ENCODE measurements at regions of chr4 and their contacts with region 1.

Region 1: DNA sequence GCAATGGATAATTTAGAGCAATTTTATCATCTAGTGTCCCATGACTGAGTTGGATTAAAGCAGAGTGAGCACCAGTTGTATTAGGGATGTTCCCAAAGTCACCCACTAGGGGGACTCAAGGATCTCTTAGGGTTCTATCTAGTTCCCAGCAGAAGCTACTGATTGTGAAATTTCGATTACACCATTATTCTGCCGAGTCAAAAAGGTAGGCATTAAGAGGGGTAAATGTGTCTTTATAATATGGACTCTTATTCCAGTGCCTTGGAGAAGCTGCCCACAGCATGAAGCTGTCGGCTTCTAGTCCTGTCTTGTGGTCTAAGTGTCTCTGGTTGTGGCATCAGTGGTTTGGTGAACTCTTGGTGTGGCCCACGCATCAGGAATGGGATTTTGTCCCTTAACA is 53.3 kb downstream of the RGS12 start:
- DNase-seq: peak in 1 of 2 donors; percentile 80
- ATAC-seq: peak; percentile 74 to 88 (median 83)
- H3K4me3 ChIP-seq: no peak overlapping the region
- H3K4me3 Mint-ChIP-seq: no peak overlapping the region
- H3K27ac ChIP-seq: no peak overlapping the region
- H3K27ac Mint-ChIP-seq: no peak overlapping the region
- H3K4me1 ChIP-seq: peaks cover 13% of the 10 kb centered on the region
- H3K4me1 Mint-ChIP-seq: peaks cover 21 to 24% of the 10 kb centered on the region in 2 donors
- H3K27me3 ChIP-seq: no peaks in the 10 kb centered on the region
- H3K27me3 Mint-ChIP-seq: peaks cover 0 to 2% of the 10 kb centered on the region in 2 donors
- CTCF ChIP-seq: peak; percentile 76

Region 2: GRCh38 chr4:3442959-3443749 is 97.0 kb after region 1 on chr4:
- intact Hi-C with region 1: loop called (anchors 1 kb)
- DNase-seq: peak; percentile 77 to 80
- ATAC-seq: peak; percentile 66 to 95 (median 87)
- H3K4me3 ChIP-seq: no peak overlapping the region
- H3K4me3 Mint-ChIP-seq: no peak overlapping the region
- H3K27ac ChIP-seq: no peak overlapping the region
- H3K27ac Mint-ChIP-seq: no peak overlapping the region
- H3K4me1 ChIP-seq: peaks cover 12% of the 10 kb centered on the region
- H3K4me1 Mint-ChIP-seq: no peaks in the 10 kb centered on the region
- H3K27me3 ChIP-seq: no peaks in the 10 kb centered on the region
- H3K27me3 Mint-ChIP-seq: no peaks in the 10 kb centered on the region
- CTCF ChIP-seq: peak; percentile 99

Region 3: DNA sequence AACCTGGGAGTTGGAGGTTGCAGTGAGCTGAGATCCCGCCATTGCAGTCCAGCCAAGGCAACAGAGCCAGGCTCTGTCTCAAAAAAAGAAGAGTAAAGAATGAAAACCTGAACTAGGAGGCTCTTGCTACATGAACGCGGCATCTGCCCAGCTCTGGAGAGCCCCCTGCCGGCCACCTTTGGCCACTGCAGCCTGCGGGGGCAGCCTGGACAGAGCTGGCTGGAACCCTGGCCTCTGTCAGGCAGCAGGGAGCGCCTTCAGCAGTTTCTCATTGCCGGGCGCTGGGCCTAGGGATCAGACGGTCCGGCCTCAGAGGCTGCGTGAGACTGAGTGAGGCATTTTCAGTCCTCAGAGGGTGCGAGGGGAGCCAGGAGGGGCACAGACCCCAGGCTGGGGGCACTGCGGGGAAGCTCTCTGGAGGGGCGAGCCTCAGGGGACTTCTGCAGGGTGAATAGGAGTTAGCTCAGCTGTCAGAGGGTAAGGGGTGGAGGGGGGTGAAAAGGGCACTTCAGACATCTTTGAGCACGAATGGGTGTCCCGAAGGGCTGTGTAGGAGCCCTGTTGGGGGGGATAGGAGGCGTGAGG is 134.5 kb after region 1 on chr4:
- intact Hi-C with region 1: loop called (anchors 1 kb)
- DNase-seq: peak; percentile 73 to 78
- ATAC-seq: peak; percentile 77 to 87 (median 80)
- H3K4me3 ChIP-seq: no peak overlapping the region
- H3K4me3 Mint-ChIP-seq: no peak overlapping the region
- H3K27ac ChIP-seq: no peak overlapping the region
- H3K27ac Mint-ChIP-seq: peak overlapping the region in 1 of 2 donors; percentile 49
- H3K4me1 ChIP-seq: peaks cover 35% of the 10 kb centered on the region
- H3K4me1 Mint-ChIP-seq: peaks cover 10 to 23% of the 10 kb centered on the region in 2 donors
- H3K27me3 ChIP-seq: no peaks in the 10 kb centered on the region
- H3K27me3 Mint-ChIP-seq: peaks cover 0 to 3% of the 10 kb centered on the region in 2 donors
- CTCF ChIP-seq: peak; percentile 97

Region 4: GRCh38 chr4:3936184-3936583 is 590.0 kb after region 1 on chr4:
- intact Hi-C with region 1: loop called (anchors 5 kb)
- DNase-seq: no peak
- ATAC-seq: no peak
- H3K4me3 ChIP-seq: no peak overlapping the region
- H3K4me3 Mint-ChIP-seq: no peak overlapping the region
- H3K27ac ChIP-seq: no peak overlapping the region
- H3K27ac Mint-ChIP-seq: no peak overlapping the region
- H3K4me1 ChIP-seq: no peaks in the 10 kb centered on the region
- H3K4me1 Mint-ChIP-seq: no peaks in the 10 kb centered on the region
- H3K27me3 ChIP-seq: no peaks in the 10 kb centered on the region
- H3K27me3 Mint-ChIP-seq: peaks cover 0 to 5% of the 10 kb centered on the region in 2 donors
- CTCF ChIP-seq: no peak